ENCODE measurements at regions of chr12 and their contacts with region 1.

Region 1: DNA sequence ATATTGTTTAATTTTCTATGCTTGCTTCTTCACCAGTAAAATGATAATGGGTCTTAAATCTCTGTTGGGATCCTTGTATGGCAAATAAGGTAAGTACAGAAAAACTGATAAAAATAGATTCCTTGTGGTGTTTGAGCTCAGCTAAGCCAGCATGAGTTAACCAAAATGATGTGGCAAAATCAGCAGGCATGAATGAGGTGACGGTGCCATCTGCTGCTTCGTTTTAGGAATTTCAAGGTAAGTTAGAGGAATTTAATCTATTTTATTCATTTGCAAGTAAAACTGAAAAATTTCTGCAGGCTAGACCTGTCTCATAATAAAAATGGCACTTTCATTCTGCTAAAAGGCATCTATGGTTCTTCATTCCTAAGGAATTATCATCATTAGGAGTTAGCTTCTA is 10.0 kb upstream of the CLEC7A start:
- DNase-seq: peak in 1 of 2 experiments; percentile 29
- H3K4me3 ChIP-seq: no peak overlapping the region
- H3K27ac ChIP-seq: no peak overlapping the region
- H3K4me1 ChIP-seq: no peaks in the 10 kb centered on the region
- H3K27me3 ChIP-seq: no peaks in the 10 kb centered on the region
- CTCF ChIP-seq: peak in 2 of 3 experiments; percentile 56 to 80; a peak in 3 of 4 replicates
- EP300 ChIP-seq: no peak
- POLR2A ChIP-seq: no peak
- RAD21 ChIP-seq: peak; percentile 95 to 97

Region 2: DNA sequence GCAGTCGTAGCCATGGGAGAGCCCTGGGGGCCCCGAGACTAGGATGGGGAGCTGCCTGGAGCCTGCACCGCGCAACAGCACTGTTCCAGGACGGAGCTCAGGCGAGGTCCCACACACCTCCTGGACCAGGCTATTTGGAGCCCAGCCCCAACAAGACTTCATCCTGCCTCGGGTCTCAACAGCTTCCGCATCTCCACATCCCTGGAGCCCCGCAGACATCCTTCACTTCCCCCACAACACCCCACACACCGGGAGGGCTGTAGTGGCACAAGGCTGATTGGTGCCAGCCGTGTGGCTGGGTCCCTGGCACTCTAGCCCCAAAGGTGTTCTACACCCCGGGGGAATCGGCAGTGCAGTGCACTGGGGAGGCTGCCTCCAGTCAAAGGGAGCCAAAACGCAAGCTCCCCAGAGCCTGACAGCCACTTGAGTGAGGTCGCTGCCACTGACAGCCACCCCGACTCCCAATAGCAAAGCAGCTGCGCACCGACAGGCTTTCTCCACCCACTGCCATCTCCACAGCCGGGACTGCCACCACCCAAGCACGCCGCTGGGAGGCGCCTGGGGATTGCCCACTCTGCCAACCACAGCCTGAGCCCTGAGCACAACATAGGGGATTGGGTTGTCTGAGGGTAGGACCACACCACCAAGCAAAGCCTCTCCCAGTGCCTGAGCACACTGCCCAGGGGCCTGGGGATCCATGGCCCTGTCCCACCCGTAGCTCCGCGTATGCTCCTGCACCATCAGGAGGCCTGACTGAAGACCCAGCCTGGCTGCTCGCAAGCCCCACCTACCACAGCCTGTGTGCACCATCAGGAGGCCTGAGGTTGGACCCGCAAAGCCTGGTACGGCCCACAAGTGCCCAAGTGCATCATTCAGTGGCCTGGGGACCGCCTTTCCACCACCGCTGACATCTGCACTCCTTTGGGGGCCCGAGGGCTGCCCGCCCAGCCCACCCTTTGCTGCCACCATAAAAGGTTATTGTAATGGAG is 325.9 kb before region 1 on chr12:
- CTCF ChIA-PET with region 1: interaction called, 17 read pairs
- POLR2A ChIA-PET with region 1: no interaction called
- DNase-seq: peak; percentile 70 to 98
- H3K4me3 ChIP-seq: peak overlapping the region in 3 of 4 experiments; percentile 22 to 50 (median 34); a peak in 3 of 8 replicates
- H3K27ac ChIP-seq: no peak overlapping the region
- H3K4me1 ChIP-seq: no peaks in the 10 kb centered on the region
- H3K27me3 ChIP-seq: no peaks in the 10 kb centered on the region
- CTCF ChIP-seq: peak; percentile 94 to 98 (median 95)
- EP300 ChIP-seq: no peak
- POLR2A ChIP-seq: no peak
- RAD21 ChIP-seq: peak; percentile 97

Region 3: GRCh38 chr12:9940375-9940774 is 199.6 kb before region 1 on chr12:
- CTCF ChIA-PET with region 1: interaction called, 11 read pairs
- POLR2A ChIA-PET with region 1: no interaction called
- DNase-seq: no peak
- H3K4me3 ChIP-seq: no peak overlapping the region
- H3K27ac ChIP-seq: no peak overlapping the region
- H3K4me1 ChIP-seq: no peaks in the 10 kb centered on the region; a peak in 1 of 7 replicates
- H3K27me3 ChIP-seq: no peaks in the 10 kb centered on the region
- CTCF ChIP-seq: peak in 1 of 3 experiments; percentile 31; a peak in 2 of 4 replicates
- EP300 ChIP-seq: no peak
- POLR2A ChIP-seq: no peak
- RAD21 ChIP-seq: peak; percentile 27 to 41

Region 4: DNA sequence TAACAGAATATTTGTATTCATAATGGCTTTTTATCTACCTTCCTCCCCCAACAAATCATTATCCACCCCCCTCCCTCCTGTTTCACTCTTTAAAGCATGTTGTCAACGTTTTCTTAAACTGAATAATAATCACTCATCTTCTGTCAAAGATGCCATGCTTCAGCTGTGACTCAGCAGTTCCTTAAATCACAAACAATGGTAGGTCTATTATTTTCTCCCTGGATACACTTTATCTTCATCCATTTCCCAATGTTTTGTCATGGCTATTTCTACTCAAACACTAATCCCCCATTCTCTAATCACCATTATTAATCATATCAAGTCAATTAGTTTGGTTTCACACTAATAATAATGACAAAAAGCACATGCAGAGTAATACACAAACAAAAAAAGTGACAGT is 123.1 kb before region 1 on chr12:
- CTCF ChIA-PET with region 1: interaction called, 48 read pairs
- POLR2A ChIA-PET with region 1: no interaction called
- DNase-seq: no peak
- H3K4me3 ChIP-seq: no peak overlapping the region
- H3K27ac ChIP-seq: no peak overlapping the region
- H3K4me1 ChIP-seq: peaks cover 0 to 3% (median 0%) of the 10 kb centered on the region in 4 experiments; a peak in 3 of 7 replicates
- H3K27me3 ChIP-seq: no peaks in the 10 kb centered on the region
- CTCF ChIP-seq: no peak
- EP300 ChIP-seq: no peak
- POLR2A ChIP-seq: no peak
- RAD21 ChIP-seq: no peak

Region 5: GRCh38 chr12:10033783-10034545 is 106.0 kb before region 1 on chr12:
- CTCF ChIA-PET with region 1: interaction called, 74 read pairs
- POLR2A ChIA-PET with region 1: interaction called, 3 read pairs
- DNase-seq: no peak
- H3K4me3 ChIP-seq: no peak overlapping the region
- H3K27ac ChIP-seq: no peak overlapping the region
- H3K4me1 ChIP-seq: peaks cover 0 to 7% (median 0%) of the 10 kb centered on the region in 4 experiments; a peak in 1 of 7 replicates
- H3K27me3 ChIP-seq: no peaks in the 10 kb centered on the region
- CTCF ChIP-seq: peak in 1 of 3 experiments; percentile 28; a peak in 1 of 4 replicates
- EP300 ChIP-seq: no peak
- POLR2A ChIP-seq: no peak
- RAD21 ChIP-seq: peak in 1 of 2 experiments; percentile 68

Region 6: DNA sequence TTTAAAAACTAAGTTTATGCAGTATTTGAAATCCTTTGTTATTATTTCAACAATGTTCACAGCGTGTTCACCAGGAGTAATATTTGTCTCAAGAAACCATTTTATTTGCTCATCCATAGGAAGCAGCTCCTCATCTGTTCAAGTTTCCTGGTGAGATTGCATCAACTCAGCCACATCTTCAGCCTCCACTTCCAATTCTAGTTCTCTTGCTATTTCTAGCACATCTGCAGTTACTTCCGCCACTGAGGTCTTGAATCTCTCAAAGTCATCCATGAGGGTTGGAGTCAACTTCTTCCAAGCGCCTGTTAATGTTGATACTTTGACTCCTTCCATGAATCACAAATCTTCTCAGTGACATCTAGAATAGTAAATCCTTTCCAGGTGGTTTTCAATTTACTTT is 91.5 kb before region 1 on chr12:
- CTCF ChIA-PET with region 1: interaction called, 18 read pairs
- POLR2A ChIA-PET with region 1: no interaction called
- DNase-seq: no peak
- H3K4me3 ChIP-seq: no peak overlapping the region
- H3K27ac ChIP-seq: no peak overlapping the region
- H3K4me1 ChIP-seq: no peaks in the 10 kb centered on the region
- H3K27me3 ChIP-seq: no peaks in the 10 kb centered on the region
- CTCF ChIP-seq: no peak
- EP300 ChIP-seq: no peak
- POLR2A ChIP-seq: no peak
- RAD21 ChIP-seq: no peak

Region 7: DNA sequence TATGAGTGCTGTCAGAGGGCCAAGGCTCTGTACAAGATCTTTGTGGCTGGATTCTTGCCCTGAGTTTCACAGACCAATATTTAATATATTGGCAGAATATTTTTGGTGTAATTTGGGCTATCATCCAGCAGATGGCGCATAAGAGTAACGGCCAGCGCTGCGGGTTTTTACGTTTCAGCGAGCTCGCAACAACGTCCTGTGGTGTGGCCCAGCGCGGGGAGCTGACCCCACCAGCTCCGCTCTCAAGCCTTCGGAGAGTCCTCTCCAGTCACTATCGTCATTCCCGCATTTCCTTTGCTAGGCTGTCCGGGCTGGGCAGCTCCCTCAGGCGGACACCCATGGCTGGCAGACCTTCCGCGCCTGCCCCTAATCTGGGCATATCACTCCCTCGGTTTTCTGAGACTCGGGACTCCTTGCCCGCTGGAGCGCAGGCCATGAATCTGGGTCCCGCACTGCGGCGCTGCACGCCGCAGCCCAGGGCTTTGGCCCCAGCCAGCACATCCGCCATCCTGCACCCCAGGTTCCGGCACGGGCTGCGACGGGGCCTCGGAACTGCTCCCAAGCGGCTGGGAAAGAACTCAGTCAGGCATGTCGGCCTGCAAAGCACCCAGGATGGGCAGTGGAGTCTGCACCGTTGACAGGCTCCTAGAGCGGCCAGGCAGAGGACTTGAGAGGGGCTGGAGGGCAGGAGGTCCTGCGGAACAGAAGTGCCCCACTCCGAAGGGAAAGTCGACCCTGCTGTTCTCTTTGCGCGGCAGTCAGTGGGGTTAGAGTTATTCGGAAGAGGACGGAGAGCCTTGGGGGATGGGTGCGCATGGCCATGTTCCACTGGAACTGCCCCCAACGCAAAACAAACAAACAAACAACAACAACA is 13.5 kb after region 1 on chr12:
- CTCF ChIA-PET with region 1: interaction called, 23 read pairs
- POLR2A ChIA-PET with region 1: interaction called, 3 read pairs
- DNase-seq: peak; percentile 61 to 82
- H3K4me3 ChIP-seq: peak overlapping the region; percentile 50 to 70 (median 66)
- H3K27ac ChIP-seq: peak overlapping the region; percentile 51; the same call in 1 of the 2 replicates
- H3K4me1 ChIP-seq: peaks cover 0 to 4% (median 1%) of the 10 kb centered on the region in 4 experiments; a peak in 2 of 7 replicates
- H3K27me3 ChIP-seq: no peaks in the 10 kb centered on the region
- CTCF ChIP-seq: peak; percentile 15 to 67 (median 56)
- EP300 ChIP-seq: no peak
- POLR2A ChIP-seq: peak; percentile 32 to 39; a peak in 2 of 3 replicates
- RAD21 ChIP-seq: peak; percentile 54 to 66

Region 8: DNA sequence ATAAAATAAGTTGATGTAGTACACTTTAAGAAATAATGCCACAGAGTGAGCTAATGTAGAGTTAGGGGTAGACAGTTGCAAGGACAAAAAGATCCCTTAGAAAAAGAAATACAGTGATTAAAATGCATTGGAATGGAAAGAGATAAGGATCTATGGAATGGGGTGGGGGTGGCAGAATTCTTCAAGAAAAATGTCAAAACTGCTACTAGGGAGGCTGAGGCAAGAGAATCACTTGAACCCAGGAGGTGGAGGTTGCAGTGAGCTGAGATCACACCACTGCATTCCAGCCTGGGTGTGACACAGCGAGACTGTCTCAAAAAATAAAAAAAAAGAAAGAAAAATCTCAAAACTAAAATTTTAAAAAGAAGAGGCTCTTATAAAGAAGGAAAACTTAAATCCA is 25.4 kb after region 1 on chr12:
- CTCF ChIA-PET with region 1: no interaction called
- POLR2A ChIA-PET with region 1: no interaction called
- DNase-seq: no peak
- H3K4me3 ChIP-seq: no peak overlapping the region
- H3K27ac ChIP-seq: no peak overlapping the region
- H3K4me1 ChIP-seq: no peaks in the 10 kb centered on the region
- H3K27me3 ChIP-seq: no peaks in the 10 kb centered on the region
- CTCF ChIP-seq: no peak
- EP300 ChIP-seq: no peak
- POLR2A ChIP-seq: no peak
- RAD21 ChIP-seq: no peak

Region 9: GRCh38 chr12:10182354-10183061 is 42.5 kb after region 1 on chr12:
- CTCF ChIA-PET with region 1: no interaction called
- POLR2A ChIA-PET with region 1: no interaction called
- DNase-seq: no peak
- H3K4me3 ChIP-seq: no peak overlapping the region
- H3K27ac ChIP-seq: no peak overlapping the region
- H3K4me1 ChIP-seq: no peaks in the 10 kb centered on the region
- H3K27me3 ChIP-seq: no peaks in the 10 kb centered on the region
- CTCF ChIP-seq: no peak
- EP300 ChIP-seq: no peak
- POLR2A ChIP-seq: no peak
- RAD21 ChIP-seq: no peak

Region 10: GRCh38 chr12:10331642-10332239 is 191.7 kb after region 1 on chr12:
- CTCF ChIA-PET with region 1: no interaction called
- POLR2A ChIA-PET with region 1: no interaction called
- DNase-seq: no peak
- H3K4me3 ChIP-seq: no peak overlapping the region
- H3K27ac ChIP-seq: no peak overlapping the region
- H3K4me1 ChIP-seq: no peaks in the 10 kb centered on the region
- H3K27me3 ChIP-seq: no peaks in the 10 kb centered on the region
- CTCF ChIP-seq: peak in 2 of 3 experiments; percentile 76 to 90; a peak in 3 of 4 replicates
- EP300 ChIP-seq: no peak
- POLR2A ChIP-seq: no peak
- RAD21 ChIP-seq: peak; percentile 90 to 91